ENCODE measurements at regions of chr1 and their contacts with region 1.

Region 1: DNA sequence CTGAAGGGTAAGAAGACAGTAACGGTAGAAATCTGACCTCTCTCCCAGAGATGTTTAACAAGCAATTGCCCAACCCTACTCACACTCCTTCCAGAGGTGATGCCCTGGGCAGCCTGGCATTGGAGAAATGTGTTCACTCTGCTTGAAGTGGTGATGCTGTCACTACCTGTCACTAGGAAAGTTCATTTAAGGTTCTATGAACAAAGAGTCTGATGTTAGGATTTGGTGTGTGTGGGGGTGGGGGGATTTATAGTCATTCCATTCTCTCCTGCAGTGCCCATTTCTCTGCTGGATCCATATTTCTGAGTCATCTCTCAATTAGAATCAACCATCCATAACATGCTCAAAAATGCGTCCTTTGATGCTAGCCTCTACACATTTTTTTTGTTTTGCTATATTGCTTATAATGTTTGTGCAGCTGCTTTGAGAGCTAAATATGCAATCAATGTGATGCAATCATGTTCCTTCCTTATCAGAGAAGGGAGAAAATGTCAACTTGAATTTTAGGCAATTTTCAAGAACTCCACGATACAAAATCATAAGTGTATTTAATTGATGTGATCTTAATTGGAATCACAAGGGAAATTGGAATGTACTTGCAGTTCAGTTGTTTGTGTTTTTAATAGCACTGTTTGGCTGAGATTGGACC is 173.9 kb downstream of the DUSP10 start:
- DNase-seq: no peak
- ATAC-seq: no peak
- H3K4me3 ChIP-seq: no peak overlapping the region
- H3K27ac ChIP-seq: no peak overlapping the region
- H3K4me1 ChIP-seq: peaks cover 16 to 36% of the 10 kb centered on the region in 2 donors
- H3K27me3 ChIP-seq: no peaks in the 10 kb centered on the region
- CTCF ChIP-seq: no peak
- POLR2A ChIP-seq: no peak

Region 2: DNA sequence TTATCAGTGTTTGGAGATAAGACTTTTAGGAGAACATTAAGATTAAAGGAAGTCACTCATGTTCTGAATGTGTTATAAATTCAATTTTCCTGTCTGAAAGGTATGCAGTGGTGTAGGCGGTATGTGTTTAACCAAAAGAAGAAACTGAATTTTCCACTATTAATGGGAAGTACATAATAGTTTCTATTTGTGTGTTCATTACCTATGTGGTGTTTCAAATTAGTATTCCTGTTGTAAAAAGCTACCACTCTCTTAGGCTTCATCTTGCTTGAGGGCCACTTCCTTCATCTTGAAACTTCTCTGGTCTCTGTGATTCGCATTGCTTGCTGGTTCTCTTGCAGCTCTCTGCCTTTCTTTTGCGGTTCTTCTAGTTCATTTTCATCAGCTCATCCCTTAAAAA is 565.4 kb before region 1 on chr1:
- in situ Hi-C with region 1: no loop called
- intact Hi-C with region 1: no loop called
- DNase-seq: no peak
- ATAC-seq: no peak
- H3K4me3 ChIP-seq: no peak overlapping the region
- H3K27ac ChIP-seq: no peak overlapping the region
- H3K4me1 ChIP-seq: no peaks in the 10 kb centered on the region
- H3K27me3 ChIP-seq: no peaks in the 10 kb centered on the region
- CTCF ChIP-seq: no peak
- POLR2A ChIP-seq: no peak

Region 3: DNA sequence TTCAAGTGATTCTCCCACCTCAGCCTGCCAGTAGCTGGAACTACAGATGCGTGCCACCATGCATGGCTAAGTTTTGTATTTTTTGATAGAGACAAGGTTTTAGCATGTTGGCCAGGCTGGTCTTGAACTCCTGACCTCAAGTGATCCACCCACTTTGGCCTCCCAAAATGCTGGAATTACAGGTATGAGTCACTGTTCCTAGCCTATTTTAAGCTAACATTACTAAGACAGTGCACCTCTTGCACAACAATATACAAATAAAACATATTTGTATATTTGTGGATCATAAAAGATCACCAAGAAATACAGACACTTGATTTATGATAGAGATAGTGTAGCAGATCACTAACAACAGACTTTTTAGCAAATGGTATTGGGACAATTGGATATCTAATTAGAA is 34.9 kb after region 1 on chr1:
- in situ Hi-C with region 1: no loop called
- intact Hi-C with region 1: loop called (anchors 5 kb)
- DNase-seq: no peak
- ATAC-seq: no peak
- H3K4me3 ChIP-seq: no peak overlapping the region
- H3K27ac ChIP-seq: no peak overlapping the region
- H3K4me1 ChIP-seq: no peaks in the 10 kb centered on the region
- H3K27me3 ChIP-seq: no peaks in the 10 kb centered on the region
- CTCF ChIP-seq: no peak
- POLR2A ChIP-seq: no peak

Region 4: DNA sequence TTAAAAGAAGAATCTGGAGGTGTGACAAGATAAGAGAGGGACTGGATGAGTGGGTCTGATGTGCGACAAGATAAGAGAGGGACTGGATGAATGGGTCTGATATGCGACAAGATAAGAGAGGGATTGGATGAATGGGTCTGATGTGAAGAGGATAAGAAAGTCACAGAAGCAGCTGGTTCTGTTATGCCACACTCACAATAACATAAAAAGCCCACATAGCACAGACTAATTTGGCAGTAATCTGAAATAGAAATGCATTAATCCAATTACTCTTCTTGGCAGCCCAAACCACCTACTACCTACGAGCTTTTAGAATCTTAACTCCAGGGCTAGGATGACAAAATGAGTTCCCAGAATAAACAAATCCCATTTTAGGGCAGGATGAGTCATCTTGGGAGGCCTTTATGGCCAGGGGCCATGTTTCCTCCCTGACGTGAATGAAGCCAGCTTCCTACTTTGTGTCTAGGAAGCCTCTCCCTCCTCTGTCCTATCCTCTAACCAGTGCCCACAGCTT is 44.3 kb after region 1 on chr1:
- in situ Hi-C with region 1: no loop called
- intact Hi-C with region 1: loop called (anchors 2 kb)
- DNase-seq: peak; percentile 37 to 81
- ATAC-seq: peak; percentile 100
- H3K4me3 ChIP-seq: no peak overlapping the region
- H3K27ac ChIP-seq: peak overlapping the region; percentile 53 to 75 (median 66)
- H3K4me1 ChIP-seq: peaks cover 12% of the 10 kb centered on the region in 2 donors
- H3K27me3 ChIP-seq: no peaks in the 10 kb centered on the region
- CTCF ChIP-seq: no peak
- POLR2A ChIP-seq: no peak

Region 5: GRCh38 chr1:222043444-222044292 is 475.7 kb after region 1 on chr1:
- in situ Hi-C with region 1: no loop called
- intact Hi-C with region 1: loop called (anchors 5 kb)
- DNase-seq: peak in 1 of 2 donors; percentile 38
- ATAC-seq: peak; percentile 22 to 27
- H3K4me3 ChIP-seq: no peak overlapping the region
- H3K27ac ChIP-seq: peak overlapping the region; percentile 66 to 89 (median 76)
- H3K4me1 ChIP-seq: peaks cover 35 to 48% of the 10 kb centered on the region in 2 donors
- H3K27me3 ChIP-seq: no peaks in the 10 kb centered on the region
- CTCF ChIP-seq: no peak
- POLR2A ChIP-seq: no peak

Measured in gastrocnemius medialis (tissue), 4 donors.